ENCODE measurements at regions of chr12 and their contacts with region 1.

Region 1: GRCh38 chr12:96035278-96036236 is at the start of gene LTA4H:
- DNase-seq: peak; percentile 92 to 99 (median 96)
- ATAC-seq: peak; percentile 93
- H3K4me3 ChIP-seq: peak within 1 kb of the TSS; percentile 89
- H3K4me3 Mint-ChIP-seq: no peak within 1 kb of the TSS
- H3K27ac ChIP-seq: peak within 1 kb of the TSS; percentile 59 to 60
- H3K27ac Mint-ChIP-seq: no peak within 1 kb of the TSS
- H3K4me1 ChIP-seq: peaks cover 20% of the 10 kb centered on the region
- H3K4me1 Mint-ChIP-seq: peaks cover 11% of the 10 kb centered on the region
- H3K27me3 ChIP-seq: no peaks in the 10 kb centered on the region
- H3K27me3 Mint-ChIP-seq: no peaks in the 10 kb centered on the region
- CTCF ChIP-seq: no peak
- total RNA-seq, gene LTA4H: 43.0 to 44.0 TPM

Region 2: DNA sequence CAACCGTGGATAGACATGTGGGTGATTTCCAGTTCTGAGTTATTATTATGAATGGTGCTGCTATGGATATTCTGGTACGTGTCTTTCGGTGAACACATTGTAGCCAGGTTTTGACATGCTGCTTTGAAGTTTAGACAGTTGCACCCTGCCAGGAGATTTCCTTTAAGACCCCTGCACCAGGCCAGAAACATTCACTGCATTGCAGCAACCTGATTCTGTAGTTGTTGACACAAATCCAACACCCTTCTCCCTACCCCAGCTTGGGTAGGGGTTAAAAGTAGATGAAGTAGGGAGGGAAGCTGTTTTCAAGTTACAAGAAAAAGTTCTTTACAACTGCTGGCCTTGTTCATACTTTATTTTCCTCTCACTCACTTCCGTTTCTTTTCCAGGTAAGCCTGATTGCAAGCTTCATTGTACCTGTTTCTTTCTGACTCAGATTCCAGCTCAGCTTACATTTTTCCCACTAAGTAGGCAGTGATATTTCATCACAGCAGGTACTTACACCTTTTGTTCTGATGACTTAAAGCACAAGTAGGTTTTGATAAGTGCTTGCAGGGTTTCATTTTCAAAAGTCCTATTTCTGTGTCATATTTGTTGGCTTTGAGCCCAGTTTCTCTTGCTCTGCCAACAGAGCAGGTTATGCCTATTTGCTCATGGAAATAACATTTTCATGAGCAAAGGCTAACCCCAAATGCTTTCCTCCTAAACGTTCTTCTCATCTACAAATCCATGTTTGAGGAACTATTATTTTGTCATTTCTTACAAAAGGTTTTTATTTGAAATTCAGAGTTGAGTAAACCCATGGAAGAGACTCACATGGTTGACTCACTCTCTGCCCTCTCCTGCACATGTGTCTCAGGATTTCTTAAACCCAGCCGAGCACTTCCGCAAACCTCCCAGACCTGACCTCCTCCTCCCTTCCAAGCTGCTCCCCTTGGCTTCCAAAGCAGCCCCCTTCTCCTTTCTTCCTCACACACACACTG is 12.0 kb after region 1 on chr12:
- CTCF ChIA-PET with region 1: no interaction called
- POLR2A ChIA-PET with region 1: interaction called, 25 read pairs
- intact Hi-C with region 1: no loop called
- DNase-seq: peak in 4 of 14 experiments; percentile 21 to 65 (median 58)
- ATAC-seq: peak; percentile 65
- H3K4me3 ChIP-seq: peak overlapping the region; percentile 14
- H3K4me3 Mint-ChIP-seq: peak overlapping the region; percentile 77
- H3K27ac ChIP-seq: peak overlapping the region; percentile 0 to 36
- H3K27ac Mint-ChIP-seq: peak overlapping the region; percentile 82
- H3K4me1 ChIP-seq: peaks cover 48% of the 10 kb centered on the region
- H3K4me1 Mint-ChIP-seq: peaks cover 44% of the 10 kb centered on the region
- H3K27me3 ChIP-seq: no peaks in the 10 kb centered on the region
- H3K27me3 Mint-ChIP-seq: no peaks in the 10 kb centered on the region
- CTCF ChIP-seq: no peak

Region 3: GRCh38 chr12:96208801-96209549 is 173.4 kb after region 1 on chr12:
- CTCF ChIA-PET with region 1: interaction called, 3 read pairs
- POLR2A ChIA-PET with region 1: interaction called, 4 read pairs
- intact Hi-C with region 1: loop called in 1 of 2 experiments (anchors 5 kb)
- DNase-seq: peak in 2 of 14 experiments; percentile 23 to 30
- ATAC-seq: no peak
- H3K4me3 ChIP-seq: peak overlapping the region; percentile 3
- H3K4me3 Mint-ChIP-seq: peak overlapping the region; percentile 87
- H3K27ac ChIP-seq: peak overlapping the region in 1 of 2 donors; percentile 46
- H3K27ac Mint-ChIP-seq: peak overlapping the region; percentile 82
- H3K4me1 ChIP-seq: peaks cover 87% of the 10 kb centered on the region
- H3K4me1 Mint-ChIP-seq: peaks cover 97% of the 10 kb centered on the region
- H3K27me3 ChIP-seq: no peaks in the 10 kb centered on the region
- H3K27me3 Mint-ChIP-seq: no peaks in the 10 kb centered on the region
- CTCF ChIP-seq: no peak

Region 4: DNA sequence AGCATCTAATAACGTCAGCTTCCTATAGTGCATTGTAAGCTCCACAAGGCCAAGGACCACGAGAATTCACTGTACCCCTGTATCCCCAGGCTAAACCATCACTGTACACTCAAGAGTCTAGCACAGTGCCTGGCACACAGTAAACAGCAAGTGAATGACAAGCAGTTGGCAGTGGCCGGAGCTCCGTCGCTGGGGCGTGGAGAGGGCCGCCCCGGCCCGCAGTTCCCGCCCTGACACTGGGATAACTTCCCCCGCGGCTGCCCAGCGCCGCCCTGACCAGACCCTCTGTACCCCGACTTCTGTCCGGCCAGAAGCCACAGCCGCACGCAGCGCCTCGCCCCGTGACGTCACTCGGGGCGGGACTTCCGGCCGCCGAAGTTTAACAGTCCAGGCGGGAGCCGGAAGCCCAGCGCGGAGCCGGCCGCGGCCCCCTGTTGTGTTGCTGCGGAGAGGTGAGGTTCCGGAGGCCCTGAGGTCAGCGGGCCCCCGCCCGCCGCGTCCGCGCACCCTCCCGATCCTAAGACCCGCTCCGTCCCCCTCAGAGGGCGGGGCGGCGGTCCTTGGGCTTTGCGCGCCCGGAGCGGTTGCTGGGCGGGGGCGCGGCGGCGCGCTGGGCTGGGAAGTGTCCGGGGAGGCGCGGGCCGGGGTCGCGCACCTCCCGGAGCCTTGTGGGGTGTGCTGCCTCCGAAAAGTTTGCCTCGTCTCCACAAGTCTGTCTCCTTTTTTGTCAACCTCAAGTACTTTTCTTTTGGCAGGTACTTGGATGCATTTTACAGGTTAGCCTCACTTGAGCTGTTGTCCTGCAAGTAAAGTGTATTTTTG is 871.5 kb after region 1 on chr12 and contains the start of gene NEDD1:
- CTCF ChIA-PET with region 1: no interaction called
- POLR2A ChIA-PET with region 1: no interaction called
- intact Hi-C with region 1: loop called in 1 of 2 experiments (anchors 10 kb)
- DNase-seq: peak; percentile 66 to 90 (median 76)
- ATAC-seq: peak; percentile 69
- H3K4me3 ChIP-seq: peak within 1 kb of the TSS; percentile 93
- H3K4me3 Mint-ChIP-seq: peak within 1 kb of the TSS; percentile 99
- H3K27ac ChIP-seq: peak within 1 kb of the TSS; percentile 90 to 99
- H3K27ac Mint-ChIP-seq: peak within 1 kb of the TSS; percentile 98
- H3K4me1 ChIP-seq: peaks cover 22% of the 10 kb centered on the region
- H3K4me1 Mint-ChIP-seq: peaks cover 49% of the 10 kb centered on the region
- H3K27me3 ChIP-seq: no peaks in the 10 kb centered on the region
- H3K27me3 Mint-ChIP-seq: no peaks in the 10 kb centered on the region
- CTCF ChIP-seq: no peak
- total RNA-seq, gene NEDD1: 25.3 to 28.8 TPM